Right ventricle myocardium inferior (tissue), 1 donor: ENCODE measurements at regions of chr20 and their contacts with region 1.

Region 1: GRCh38 chr20:45436732-45437391 is 20.9 kb downstream of the PIGT start:
- DNase-seq: peak; percentile 94
- ATAC-seq: peak; percentile 95

Region 2: GRCh38 chr20:45320948-45321595 is 115.8 kb before region 1 on chr20:
- intact Hi-C with region 1: loop called (anchors 1 kb)
- DNase-seq: no peak
- ATAC-seq: no peak

Region 3: GRCh38 chr20:45373353-45374100 is 63.3 kb before region 1 on chr20:
- intact Hi-C with region 1: loop called (anchors 1 kb)
- DNase-seq: peak; percentile 92
- ATAC-seq: peak; percentile 88

Region 4: GRCh38 chr20:45575931-45576330 is 139.1 kb after region 1 on chr20:
- intact Hi-C with region 1: no loop called
- DNase-seq: no peak
- ATAC-seq: no peak

Region 5: GRCh38 chr20:45771182-45771759 is 334.4 kb after region 1 on chr20:
- intact Hi-C with region 1: loop called (anchors 10 kb)
- DNase-seq: no peak
- ATAC-seq: peak; percentile 73